CD4-positive, alpha-beta memory T cell (primary cell): ENCODE measurements at regions of chr14 and their contacts with region 1.

Region 1: GRCh38 chr14:54566410-54567223 is at the start of gene SAMD4A:
- DNase-seq: peak; percentile 58 to 82 (median 66)
- H3K4me3 ChIP-seq: peak within 1 kb of the TSS; percentile 57 to 69
- H3K4me3 Mint-ChIP-seq: peak within 1 kb of the TSS; percentile 92 to 99 (median 96)
- H3K27ac ChIP-seq: peak within 1 kb of the TSS; percentile 79
- H3K27ac Mint-ChIP-seq: peak within 1 kb of the TSS; percentile 88 to 97 (median 95)
- H3K4me1 ChIP-seq: peaks cover 16% of the 10 kb centered on the region
- H3K4me1 Mint-ChIP-seq: peaks cover 8 to 31% (median 11%) of the 10 kb centered on the region in 4 donors
- H3K27me3 ChIP-seq: no peaks in the 10 kb centered on the region
- H3K27me3 Mint-ChIP-seq: peaks cover 2 to 3% of the 10 kb centered on the region in 2 donors
- total RNA-seq, gene SAMD4A: 0.93 to 1.4 TPM

Region 2: GRCh38 chr14:54396493-54397335 is 169.9 kb before region 1 on chr14 and contains the start of gene CDKN3:
- CTCF ChIA-PET with region 1: interaction called, 3 read pairs
- POLR2A ChIA-PET with region 1: interaction called, 4 read pairs
- intact Hi-C with region 1: loop called (anchors 1 kb)
- DNase-seq: peak; percentile 97
- H3K4me3 ChIP-seq: peak within 1 kb of the TSS; percentile 69 to 73
- H3K4me3 Mint-ChIP-seq: peak within 1 kb of the TSS; percentile 87 to 92 (median 89)
- H3K27ac ChIP-seq: peak within 1 kb of the TSS; percentile 51
- H3K27ac Mint-ChIP-seq: peak within 1 kb of the TSS; percentile 57 to 96 (median 86)
- H3K4me1 ChIP-seq: peaks cover 18% of the 10 kb centered on the region
- H3K4me1 Mint-ChIP-seq: peaks cover 10 to 23% (median 15%) of the 10 kb centered on the region in 4 donors
- H3K27me3 ChIP-seq: no peaks in the 10 kb centered on the region
- H3K27me3 Mint-ChIP-seq: peaks cover under 1 to 3% of the 10 kb centered on the region in 2 donors
- total RNA-seq, gene CDKN3: 1.1 to 1.6 TPM

Region 3: DNA sequence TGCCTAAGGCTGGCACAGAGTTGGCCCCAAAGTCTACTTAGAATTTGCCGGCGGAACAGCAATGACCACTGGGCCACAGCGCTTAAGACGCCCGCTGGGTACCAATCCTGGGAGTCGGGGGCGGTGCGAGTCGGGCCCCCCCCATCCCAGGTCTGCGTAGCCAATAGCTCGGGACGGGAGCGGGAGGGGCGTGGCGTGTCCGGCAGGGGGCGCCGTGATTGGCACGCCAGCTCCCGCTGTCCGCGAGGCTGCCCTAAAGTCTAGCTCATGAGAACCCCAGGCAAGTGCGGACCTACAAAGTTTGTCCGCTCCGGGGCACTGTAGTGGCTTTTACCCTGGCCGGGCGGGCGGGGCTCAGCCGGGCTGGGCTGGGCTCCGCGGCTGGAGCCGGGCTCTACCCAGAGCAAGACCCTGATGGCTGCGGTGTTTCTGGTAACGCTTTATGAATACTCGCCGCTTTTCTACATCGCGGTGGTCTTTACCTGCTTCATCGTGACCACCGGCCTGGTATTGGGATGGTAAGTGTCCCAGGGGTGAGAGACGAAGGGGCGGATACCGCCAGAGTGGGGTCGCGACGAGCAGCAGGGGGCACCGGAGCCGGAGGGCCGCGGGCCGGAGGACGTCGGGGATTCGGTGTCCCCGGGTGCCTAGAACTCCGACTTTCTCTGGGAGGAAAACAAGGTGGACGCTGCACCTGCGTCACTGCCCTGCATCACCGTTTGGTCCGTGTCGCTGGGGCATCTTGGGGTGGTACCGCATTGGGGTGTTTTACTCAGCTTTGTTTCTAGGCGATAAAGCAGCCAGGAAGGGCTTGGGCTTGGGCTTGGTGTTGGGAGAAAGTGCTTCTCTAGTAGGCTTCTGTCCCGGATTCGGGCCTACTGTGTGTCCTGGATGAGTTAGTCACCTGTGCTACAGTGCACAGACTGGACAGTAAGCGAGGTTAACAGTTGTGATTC is 56.8 kb before region 1 on chr14 and contains the start of gene CGRRF1:
- CTCF ChIA-PET with region 1: interaction called, 6 read pairs
- POLR2A ChIA-PET with region 1: interaction called, 12 read pairs
- intact Hi-C with region 1: loop called (anchors 1 kb)
- DNase-seq: peak; percentile 93 to 95 (median 93)
- H3K4me3 ChIP-seq: peak within 1 kb of the TSS; percentile 86 to 87
- H3K4me3 Mint-ChIP-seq: peak within 1 kb of the TSS; percentile 93 to 99 (median 97)
- H3K27ac ChIP-seq: peak within 1 kb of the TSS; percentile 77
- H3K27ac Mint-ChIP-seq: peak within 1 kb of the TSS; percentile 84 to 97 (median 96)
- H3K4me1 ChIP-seq: peaks cover 41% of the 10 kb centered on the region
- H3K4me1 Mint-ChIP-seq: peaks cover 46 to 61% (median 50%) of the 10 kb centered on the region in 4 donors
- H3K27me3 ChIP-seq: no peaks in the 10 kb centered on the region
- H3K27me3 Mint-ChIP-seq: no peaks in the 10 kb centered on the region
- total RNA-seq, gene CGRRF1: 21.8 to 23.8 TPM

Region 4: GRCh38 chr14:54691525-54692283 is 125.1 kb after region 1 on chr14:
- CTCF ChIA-PET with region 1: interaction called, 73 read pairs
- POLR2A ChIA-PET with region 1: no interaction called
- intact Hi-C with region 1: loop called (anchors 1 kb)
- DNase-seq: peak in 4 of 5 donors; percentile 17 to 34 (median 30)
- H3K4me3 ChIP-seq: no peak overlapping the region
- H3K4me3 Mint-ChIP-seq: no peak overlapping the region
- H3K27ac ChIP-seq: no peak overlapping the region
- H3K27ac Mint-ChIP-seq: no peak overlapping the region
- H3K4me1 ChIP-seq: no peaks in the 10 kb centered on the region
- H3K4me1 Mint-ChIP-seq: no peaks in the 10 kb centered on the region
- H3K27me3 ChIP-seq: no peaks in the 10 kb centered on the region
- H3K27me3 Mint-ChIP-seq: peaks cover 2 to 4% of the 10 kb centered on the region in 2 donors

Region 5: GRCh38 chr14:54805521-54806322 is 239.1 kb after region 1 on chr14:
- CTCF ChIA-PET with region 1: interaction called, 32 read pairs
- POLR2A ChIA-PET with region 1: interaction called, 3 read pairs
- intact Hi-C with region 1: loop called (anchors 1 kb)
- DNase-seq: peak; percentile 55 to 64 (median 62)
- H3K4me3 ChIP-seq: no peak overlapping the region
- H3K4me3 Mint-ChIP-seq: peak overlapping the region in 2 of 8 donors; percentile 9 to 24
- H3K27ac ChIP-seq: no peak overlapping the region
- H3K27ac Mint-ChIP-seq: peak overlapping the region in 1 of 7 donors; percentile 4
- H3K4me1 ChIP-seq: no peaks in the 10 kb centered on the region
- H3K4me1 Mint-ChIP-seq: peaks cover 1 to 7% (median 5%) of the 10 kb centered on the region in 4 donors
- H3K27me3 ChIP-seq: no peaks in the 10 kb centered on the region
- H3K27me3 Mint-ChIP-seq: peaks cover 4 to 10% of the 10 kb centered on the region in 2 donors

Region 6: GRCh38 chr14:55026793-55027561 is 460.4 kb after region 1 on chr14 and contains the starts of genes SOCS4 and WDHD1:
- CTCF ChIA-PET with region 1: no interaction called
- POLR2A ChIA-PET with region 1: interaction called, 3 read pairs
- intact Hi-C with region 1: loop called (anchors 2 kb)
- DNase-seq: peak; percentile 96 to 98 (median 97)
- H3K4me3 ChIP-seq: peak within 1 kb of the TSS; percentile 70 to 87
- H3K4me3 Mint-ChIP-seq: peak within 1 kb of the TSS; percentile 87 to 95 (median 94)
- H3K27ac ChIP-seq: peak within 1 kb of the TSS; percentile 89
- H3K27ac Mint-ChIP-seq: peak within 1 kb of the TSS; percentile 87 to 98 (median 96)
- H3K4me1 ChIP-seq: peaks cover 47% of the 10 kb centered on the region
- H3K4me1 Mint-ChIP-seq: peaks cover 37 to 56% (median 44%) of the 10 kb centered on the region in 4 donors
- H3K27me3 ChIP-seq: no peaks in the 10 kb centered on the region
- H3K27me3 Mint-ChIP-seq: no peaks in the 10 kb centered on the region
- total RNA-seq, gene SOCS4: 19.2 to 24.5 TPM
- total RNA-seq, gene WDHD1: 4.0 to 4.1 TPM

Region 7: DNA sequence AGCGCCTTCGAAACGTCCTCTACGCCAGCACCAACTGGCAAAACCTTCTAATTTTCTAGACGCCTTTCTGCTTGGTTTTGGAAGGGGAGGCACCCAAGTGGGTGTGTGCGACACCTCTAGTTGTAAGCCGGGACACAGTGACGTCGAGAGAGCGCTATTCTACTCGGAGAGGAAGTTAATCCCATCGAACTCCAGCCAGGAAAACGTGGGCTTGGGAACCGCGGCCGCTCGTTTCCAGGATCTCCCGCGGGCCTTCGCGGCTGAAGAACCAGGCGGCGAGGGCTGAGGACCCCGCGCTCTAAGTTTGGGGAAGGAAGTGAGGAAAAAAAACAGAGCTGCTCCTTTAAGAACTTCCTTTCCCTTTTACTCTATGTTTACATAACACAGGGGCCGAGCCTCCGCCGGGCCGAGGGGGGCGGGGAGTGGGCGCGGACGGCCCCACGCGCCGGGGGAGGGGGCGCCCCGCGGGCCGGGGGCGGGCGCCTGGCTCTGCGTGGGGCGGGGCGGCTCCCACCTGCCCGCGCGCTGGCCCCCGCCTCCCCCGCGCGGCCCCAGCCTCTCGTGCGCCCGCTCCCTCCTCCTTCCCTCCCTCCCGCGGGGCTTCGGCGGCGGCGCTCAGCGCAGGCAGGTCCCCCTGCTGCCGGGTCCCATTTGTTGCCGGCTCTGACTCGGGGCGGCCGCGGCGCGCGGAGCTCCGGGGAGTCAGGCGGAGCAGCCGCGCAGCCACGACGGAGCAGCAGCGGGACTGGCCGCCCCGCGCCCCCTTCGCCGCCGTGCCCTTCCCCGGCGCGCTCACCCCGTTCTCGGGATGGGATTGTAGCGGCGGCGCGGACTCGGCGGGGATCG is 1551.4 kb after region 1 on chr14 and contains the start of gene PELI2:
- CTCF ChIA-PET with region 1: no interaction called
- POLR2A ChIA-PET with region 1: no interaction called
- intact Hi-C with region 1: loop called (anchors 5 kb)
- DNase-seq: peak; percentile 86 to 91 (median 90)
- H3K4me3 ChIP-seq: peak within 1 kb of the TSS; percentile 45 to 72
- H3K4me3 Mint-ChIP-seq: peak within 1 kb of the TSS; percentile 94 to 99 (median 95)
- H3K27ac ChIP-seq: peak within 1 kb of the TSS; percentile 81
- H3K27ac Mint-ChIP-seq: peak within 1 kb of the TSS; percentile 97 to 99 (median 99)
- H3K4me1 ChIP-seq: peaks cover 39% of the 10 kb centered on the region
- H3K4me1 Mint-ChIP-seq: peaks cover 36 to 56% (median 43%) of the 10 kb centered on the region in 4 donors
- H3K27me3 ChIP-seq: no peaks in the 10 kb centered on the region
- H3K27me3 Mint-ChIP-seq: peaks cover 3 to 4% of the 10 kb centered on the region in 2 donors
- total RNA-seq, gene PELI2: 13.6 to 16.4 TPM